Sciatic nerve (tissue), 2 donors: ENCODE measurements at regions of chr5 and their contacts with region 1.

Region 1: DNA sequence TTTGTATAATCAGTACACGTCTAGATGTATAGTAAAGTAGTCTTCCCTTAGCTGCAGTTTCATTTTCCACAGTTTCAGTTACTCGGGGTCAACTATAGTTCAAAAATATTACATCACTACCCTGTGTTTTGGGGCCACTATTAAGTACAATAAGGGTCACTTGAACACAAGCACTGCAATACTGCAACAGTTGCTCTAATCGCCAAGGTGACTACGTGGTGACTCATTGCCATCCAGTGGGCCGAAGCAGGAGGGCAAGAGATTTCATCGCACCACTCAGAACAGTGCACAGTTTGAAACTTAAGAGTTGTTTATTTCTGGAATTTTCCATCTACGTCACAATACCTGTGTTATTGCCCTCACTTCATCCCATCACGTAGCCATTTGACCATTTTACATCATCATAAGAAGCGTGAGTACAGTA is at the start of gene ARL14EPL:
- DNase-seq: no peak
- ATAC-seq: peak; percentile 76
- total RNA-seq, gene ARL14EPL: not detected

Region 2: GRCh38 chr5:114999176-114999575 is 1032.9 kb before region 1 on chr5:
- intact Hi-C with region 1: loop called (anchors 10 kb)
- DNase-seq: no peak
- ATAC-seq: no peak

Region 3: GRCh38 chr5:116013207-116013785 is 18.8 kb before region 1 on chr5:
- intact Hi-C with region 1: no loop called
- DNase-seq: no peak
- ATAC-seq: no peak